ENCODE measurements at regions of chr4 and their contacts with region 1.

Region 1: DNA sequence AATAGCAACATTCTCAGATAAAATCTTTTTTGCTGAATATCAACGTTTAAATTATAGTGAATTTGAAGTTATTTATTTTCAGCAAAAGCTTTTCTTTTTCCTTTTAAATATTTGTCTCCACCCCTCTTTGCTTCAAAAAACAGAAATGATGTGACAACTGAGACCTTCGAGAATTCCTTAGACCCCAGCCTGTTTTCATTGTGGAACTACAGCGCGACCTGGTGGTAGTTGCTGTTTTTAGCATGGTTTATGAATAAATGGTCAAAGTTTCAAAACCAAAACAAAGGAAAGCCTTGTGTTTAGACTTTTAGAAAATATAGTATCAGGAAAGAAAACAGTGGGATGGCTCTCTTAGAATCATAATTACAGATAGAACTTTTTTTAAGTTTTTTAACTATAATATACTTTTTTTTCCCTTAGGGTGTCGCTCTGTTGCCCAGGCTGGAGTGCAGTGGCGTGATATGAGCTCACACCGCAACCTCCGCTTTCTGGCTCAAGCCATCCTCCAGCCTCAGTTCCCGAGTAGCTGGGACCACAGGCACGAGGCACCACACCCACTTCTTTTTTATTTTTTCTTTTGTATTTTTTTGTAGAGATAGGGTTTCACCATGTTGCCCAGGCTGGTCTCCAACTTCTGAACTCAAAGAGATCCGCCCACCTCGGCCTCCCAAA is 26.8 kb upstream of the TMEM184C start:
- DNase-seq: peak in 5 of 9 donors; percentile 7 to 26 (median 10)
- ATAC-seq: peak; percentile 47
- H3K4me3 ChIP-seq: no peak overlapping the region
- H3K4me3 Mint-ChIP-seq: no peak overlapping the region
- H3K27ac ChIP-seq: no peak overlapping the region
- H3K27ac Mint-ChIP-seq: no peak overlapping the region
- H3K4me1 ChIP-seq: no peaks in the 10 kb centered on the region
- H3K4me1 Mint-ChIP-seq: peaks cover 0 to 7% (median 3%) of the 10 kb centered on the region in 7 donors
- H3K27me3 ChIP-seq: no peaks in the 10 kb centered on the region
- H3K27me3 Mint-ChIP-seq: peaks cover 0 to 12% (median 5%) of the 10 kb centered on the region in 5 donors

Region 2: GRCh38 chr4:147019061-147019460 is 571.3 kb before region 1 on chr4:
- CTCF ChIA-PET with region 1: no interaction called
- POLR2A ChIA-PET with region 1: no interaction called
- intact Hi-C with region 1: loop called in 1 of 2 experiments (anchors 2 kb)
- DNase-seq: peak in 8 of 9 donors; percentile 18 to 41 (median 40)
- ATAC-seq: peak; percentile 37
- H3K4me3 ChIP-seq: no peak overlapping the region
- H3K4me3 Mint-ChIP-seq: no peak overlapping the region
- H3K27ac ChIP-seq: no peak overlapping the region
- H3K27ac Mint-ChIP-seq: no peak overlapping the region
- H3K4me1 ChIP-seq: no peaks in the 10 kb centered on the region
- H3K4me1 Mint-ChIP-seq: no peaks in the 10 kb centered on the region
- H3K27me3 ChIP-seq: no peaks in the 10 kb centered on the region
- H3K27me3 Mint-ChIP-seq: peaks cover 0 to 5% (median 0%) of the 10 kb centered on the region in 5 donors

Region 3: GRCh38 chr4:147498031-147498660 is 92.2 kb before region 1 on chr4:
- CTCF ChIA-PET with region 1: no interaction called
- POLR2A ChIA-PET with region 1: no interaction called
- intact Hi-C with region 1: no loop called
- DNase-seq: no peak
- ATAC-seq: no peak
- H3K4me3 ChIP-seq: no peak overlapping the region
- H3K4me3 Mint-ChIP-seq: no peak overlapping the region
- H3K27ac ChIP-seq: no peak overlapping the region
- H3K27ac Mint-ChIP-seq: no peak overlapping the region
- H3K4me1 ChIP-seq: no peaks in the 10 kb centered on the region
- H3K4me1 Mint-ChIP-seq: no peaks in the 10 kb centered on the region
- H3K27me3 ChIP-seq: peaks cover 0 to 1% of the 10 kb centered on the region in 2 donors
- H3K27me3 Mint-ChIP-seq: peaks cover 0 to 26% (median 7%) of the 10 kb centered on the region in 5 donors

Region 4: DNA sequence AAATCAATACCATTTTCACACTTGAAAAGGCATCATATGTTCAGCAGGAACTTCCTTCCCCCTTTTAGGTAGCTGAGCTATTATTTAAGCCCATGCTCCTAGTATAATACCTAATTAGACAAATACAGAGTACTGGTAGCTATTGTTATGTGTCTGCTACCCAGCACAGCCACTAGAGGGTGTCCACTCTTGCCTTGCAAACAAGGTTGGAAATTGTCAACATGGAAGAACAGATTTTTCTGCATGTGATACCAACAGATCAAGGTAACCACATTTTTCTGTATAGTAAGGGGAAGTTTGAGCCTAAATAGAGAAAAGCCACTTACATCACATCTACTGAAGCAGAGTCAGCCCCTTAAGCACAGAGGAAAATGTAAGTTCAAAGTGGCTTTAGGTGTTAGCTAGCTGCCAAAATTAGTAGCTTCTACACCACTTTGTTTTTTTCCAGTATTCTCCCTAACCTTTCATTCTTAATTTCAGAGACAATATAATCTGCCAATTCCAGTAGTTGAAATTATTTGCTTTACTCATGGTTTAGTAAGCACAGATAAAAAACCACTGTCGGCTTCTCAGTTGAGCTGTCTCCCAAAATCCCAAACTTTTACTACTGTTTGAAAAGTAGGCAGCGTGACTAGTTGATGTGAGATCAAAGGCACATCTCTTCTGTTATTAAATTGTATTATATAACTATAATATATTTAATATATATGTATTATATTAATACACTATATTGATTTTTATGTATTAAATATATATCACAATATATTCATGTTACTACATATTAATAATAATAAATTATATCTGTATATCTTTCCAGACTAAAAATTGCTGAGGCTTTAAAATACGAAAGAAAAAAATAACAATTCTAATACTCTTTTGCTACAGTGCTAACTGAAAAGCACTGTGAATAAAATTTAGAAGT is 71.3 kb before region 1 on chr4:
- CTCF ChIA-PET with region 1: no interaction called
- POLR2A ChIA-PET with region 1: no interaction called
- intact Hi-C with region 1: loop called (anchors 1 kb)
- DNase-seq: peak in 7 of 9 donors; percentile 1 to 40 (median 27)
- ATAC-seq: peak; percentile 80
- H3K4me3 ChIP-seq: no peak overlapping the region
- H3K4me3 Mint-ChIP-seq: no peak overlapping the region
- H3K27ac ChIP-seq: no peak overlapping the region
- H3K27ac Mint-ChIP-seq: peak overlapping the region in 1 of 9 donors; percentile 23
- H3K4me1 ChIP-seq: no peaks in the 10 kb centered on the region
- H3K4me1 Mint-ChIP-seq: no peaks in the 10 kb centered on the region
- H3K27me3 ChIP-seq: no peaks in the 10 kb centered on the region
- H3K27me3 Mint-ChIP-seq: peaks cover 4 to 11% (median 7%) of the 10 kb centered on the region in 5 donors

Region 5: DNA sequence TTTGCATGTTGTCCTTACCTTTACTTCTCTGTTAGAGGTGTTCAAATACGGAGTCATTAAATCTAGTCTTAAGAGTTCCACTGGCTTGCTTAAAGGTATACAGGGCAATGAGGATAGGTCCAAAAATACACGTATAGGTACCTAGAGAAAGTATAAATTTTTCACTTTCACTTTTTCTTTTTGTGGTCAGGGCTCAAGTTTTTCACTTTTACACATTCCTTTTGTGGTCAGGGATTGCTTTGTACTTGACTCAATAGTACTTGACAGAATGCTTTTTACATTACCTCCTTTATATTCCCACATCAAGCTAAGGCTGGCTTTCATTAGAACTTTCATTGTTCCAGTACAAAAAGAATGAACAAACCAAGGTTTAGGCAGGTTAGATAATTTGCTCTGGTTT is 48.6 kb after region 1 on chr4:
- CTCF ChIA-PET with region 1: no interaction called
- POLR2A ChIA-PET with region 1: no interaction called
- intact Hi-C with region 1: no loop called
- DNase-seq: no peak
- ATAC-seq: no peak
- H3K4me3 ChIP-seq: no peak overlapping the region
- H3K4me3 Mint-ChIP-seq: peak overlapping the region in 5 of 10 donors; percentile 15 to 68 (median 34)
- H3K27ac ChIP-seq: peak overlapping the region; percentile 0
- H3K27ac Mint-ChIP-seq: peak overlapping the region in 8 of 9 donors; percentile 10 to 87 (median 65)
- H3K4me1 ChIP-seq: no peaks in the 10 kb centered on the region
- H3K4me1 Mint-ChIP-seq: peaks cover 10 to 30% (median 25%) of the 10 kb centered on the region in 7 donors
- H3K27me3 ChIP-seq: no peaks in the 10 kb centered on the region
- H3K27me3 Mint-ChIP-seq: no peaks in the 10 kb centered on the region